ENCODE measurements at regions of chr17 and their contacts with region 1.

Region 1: GRCh38 chr17:76103274-76104139 is at the start of gene EXOC7:
- DNase-seq: peak; percentile 73 to 98
- H3K4me3 ChIP-seq: peak within 1 kb of the TSS; percentile 53 to 81 (median 73)
- H3K27ac ChIP-seq: peak within 1 kb of the TSS; percentile 78
- H3K4me1 ChIP-seq: peaks cover 6 to 16% (median 9%) of the 10 kb centered on the region in 4 experiments; a peak in 6 of 7 replicates
- H3K27me3 ChIP-seq: no peaks in the 10 kb centered on the region
- CTCF ChIP-seq: no peak
- EP300 ChIP-seq: no peak
- POLR2A ChIP-seq: peak in 1 of 2 experiments; percentile 66; a peak in 2 of 3 replicates
- RAD21 ChIP-seq: peak in 1 of 2 experiments; percentile 14; a peak in 1 of 4 replicates
- total RNA-seq, gene EXOC7: 92.6 and 95.3 TPM in 2 replicates

Region 2: DNA sequence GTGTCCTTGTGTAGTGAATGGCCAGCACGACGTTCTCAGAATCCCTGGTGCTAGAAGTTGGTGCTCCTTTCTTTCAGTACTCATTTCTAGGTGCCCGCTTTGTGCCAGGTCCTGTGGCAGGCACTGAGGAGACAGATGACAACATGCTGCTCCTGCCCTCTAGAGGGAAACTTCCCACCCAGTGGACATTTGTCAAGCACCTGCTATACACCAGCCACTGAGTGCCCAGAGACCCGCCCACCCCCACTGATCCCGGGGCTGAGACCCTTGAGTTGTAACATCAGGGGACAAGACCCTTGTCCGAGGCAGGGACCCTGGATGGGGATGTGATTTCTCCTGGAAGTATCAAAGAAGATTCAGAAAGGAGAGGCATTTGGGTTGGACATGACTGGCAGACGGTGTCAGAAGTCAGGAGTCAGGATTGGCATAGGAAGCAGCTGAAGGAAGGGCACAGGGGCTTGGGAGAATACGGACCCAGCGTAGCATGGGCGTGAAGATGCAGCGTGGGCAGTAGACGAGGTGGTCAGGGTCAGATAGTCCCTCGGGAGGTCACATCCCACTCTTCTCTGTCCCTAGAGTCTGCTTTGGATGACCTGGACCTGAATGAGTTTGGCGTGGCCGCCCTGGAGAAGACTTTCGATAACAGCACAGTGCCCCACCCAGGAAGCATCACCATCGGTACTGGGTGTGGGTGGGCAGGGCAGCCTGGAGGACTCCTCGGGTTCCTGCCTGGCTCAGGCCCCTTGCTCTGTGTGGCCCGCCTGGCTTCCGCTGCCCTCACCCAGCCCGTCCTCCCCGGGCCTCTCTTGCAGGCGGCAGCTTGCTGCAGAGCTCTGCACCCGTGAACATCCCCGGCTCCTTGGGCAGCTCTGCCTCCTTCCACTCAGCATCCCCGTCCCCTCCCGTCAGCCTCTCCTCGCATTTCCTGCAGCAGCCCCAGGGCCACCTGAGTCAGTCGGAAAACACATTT is 284.1 kb before region 1 on chr17:
- CTCF ChIA-PET with region 1: no interaction called
- POLR2A ChIA-PET with region 1: no interaction called
- DNase-seq: no peak
- H3K4me3 ChIP-seq: no peak overlapping the region
- H3K27ac ChIP-seq: no peak overlapping the region
- H3K4me1 ChIP-seq: no peaks in the 10 kb centered on the region
- H3K27me3 ChIP-seq: no peaks in the 10 kb centered on the region
- CTCF ChIP-seq: no peak
- EP300 ChIP-seq: no peak
- POLR2A ChIP-seq: no peak
- RAD21 ChIP-seq: no peak

Region 3: DNA sequence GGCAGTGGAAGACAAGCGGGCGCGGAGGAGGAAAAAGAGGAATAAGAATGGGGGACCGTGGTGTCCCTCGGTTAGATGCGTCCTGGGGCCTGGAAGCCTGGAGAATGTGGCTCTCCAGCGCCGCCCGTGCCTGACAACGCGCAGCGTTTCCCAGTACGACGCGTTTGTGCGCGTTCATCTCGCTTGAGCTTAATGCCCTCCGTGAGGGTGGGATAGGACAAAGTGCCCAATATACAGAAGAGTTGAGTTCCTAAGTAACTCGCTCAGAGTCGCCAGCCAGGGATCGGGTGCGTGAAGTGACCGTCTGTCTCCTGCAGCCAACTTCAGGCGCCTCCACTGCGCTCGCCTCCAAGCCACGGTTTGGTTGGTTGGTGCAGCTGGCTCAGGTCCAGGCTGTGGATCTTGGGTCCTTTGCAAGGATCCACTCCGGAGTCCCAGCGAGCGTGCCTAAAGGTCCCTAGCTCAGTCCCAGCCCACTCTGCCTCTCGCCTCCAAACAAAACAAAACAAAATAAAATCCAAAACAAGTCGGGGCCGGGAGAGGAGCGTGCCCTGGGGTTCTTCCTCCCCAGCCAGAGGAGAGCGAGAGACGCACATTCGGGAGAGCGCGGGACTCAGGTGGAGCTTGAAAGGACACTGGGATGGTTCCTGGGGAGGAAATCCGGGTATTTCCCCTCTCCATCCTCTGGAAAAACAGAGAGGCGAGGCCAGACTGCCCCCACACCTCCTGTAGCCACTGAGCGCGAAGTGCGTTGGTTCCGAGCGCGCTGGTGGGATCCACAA is 28.0 kb before region 1 on chr17:
- CTCF ChIA-PET with region 1: interaction called, 3 read pairs
- POLR2A ChIA-PET with region 1: interaction called, 23 read pairs
- DNase-seq: peak in 1 of 2 experiments; percentile 81
- H3K4me3 ChIP-seq: peak overlapping the region; percentile 21 to 60 (median 40); a peak in 5 of 8 replicates
- H3K27ac ChIP-seq: no peak overlapping the region
- H3K4me1 ChIP-seq: peaks cover 0 to 54% (median 36%) of the 10 kb centered on the region in 4 experiments; a peak in 6 of 7 replicates
- H3K27me3 ChIP-seq: peaks cover 54 to 72% (median 68%) of the 10 kb centered on the region in 4 experiments
- CTCF ChIP-seq: peak; percentile 31 to 75 (median 68)
- EP300 ChIP-seq: no peak
- POLR2A ChIP-seq: no peak
- RAD21 ChIP-seq: peak; percentile 33 to 40; a peak in 3 of 4 replicates

Region 4: DNA sequence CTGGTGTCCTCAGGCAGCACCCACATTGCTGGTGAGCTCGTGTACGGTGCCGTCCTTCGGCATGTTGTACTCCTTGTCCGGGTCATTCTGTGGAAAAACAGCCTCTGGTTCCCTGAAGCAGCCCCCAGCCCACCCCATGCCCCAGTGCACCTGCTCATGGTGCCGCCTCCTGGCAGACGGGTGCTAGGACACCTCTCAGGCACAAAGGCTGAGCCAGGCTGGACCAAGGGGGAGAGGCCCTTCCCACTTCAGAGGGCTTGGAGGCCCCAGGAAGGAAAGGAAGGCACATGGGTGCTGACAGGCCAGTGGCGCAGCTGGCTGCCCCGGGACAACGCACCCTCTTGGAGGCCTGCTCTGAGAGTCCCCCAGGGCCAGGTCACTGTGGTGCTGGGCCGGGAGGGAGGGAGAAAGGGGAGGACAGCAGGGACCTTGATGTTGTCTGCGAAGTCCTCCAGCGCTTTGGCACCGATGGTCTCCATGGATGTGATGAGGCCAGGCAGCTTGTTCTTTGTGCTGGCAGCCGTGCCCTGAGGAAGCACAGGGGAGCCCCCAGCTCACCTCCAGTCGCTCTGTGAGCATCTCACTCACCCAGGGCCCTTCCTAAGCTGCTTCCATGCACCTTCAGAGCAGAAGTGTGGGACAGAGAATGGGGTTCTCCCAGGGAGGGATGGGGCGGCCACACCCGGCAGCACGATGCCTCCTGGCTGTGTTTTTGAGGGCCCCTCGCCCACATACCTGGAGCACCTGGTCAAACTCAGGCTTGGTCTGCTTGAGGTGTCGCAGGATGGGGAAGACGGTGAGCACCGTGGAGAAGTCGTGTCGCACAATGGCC is 15.3 kb before region 1 on chr17:
- CTCF ChIA-PET with region 1: interaction called, 11 read pairs
- POLR2A ChIA-PET with region 1: interaction called, 11 read pairs
- DNase-seq: peak in 1 of 2 experiments; percentile 72
- H3K4me3 ChIP-seq: no peak overlapping the region
- H3K27ac ChIP-seq: no peak overlapping the region
- H3K4me1 ChIP-seq: no peaks in the 10 kb centered on the region
- H3K27me3 ChIP-seq: no peaks in the 10 kb centered on the region
- CTCF ChIP-seq: peak; percentile 60 to 74 (median 63)
- EP300 ChIP-seq: no peak
- POLR2A ChIP-seq: no peak
- RAD21 ChIP-seq: peak; percentile 40 to 56

Region 5: DNA sequence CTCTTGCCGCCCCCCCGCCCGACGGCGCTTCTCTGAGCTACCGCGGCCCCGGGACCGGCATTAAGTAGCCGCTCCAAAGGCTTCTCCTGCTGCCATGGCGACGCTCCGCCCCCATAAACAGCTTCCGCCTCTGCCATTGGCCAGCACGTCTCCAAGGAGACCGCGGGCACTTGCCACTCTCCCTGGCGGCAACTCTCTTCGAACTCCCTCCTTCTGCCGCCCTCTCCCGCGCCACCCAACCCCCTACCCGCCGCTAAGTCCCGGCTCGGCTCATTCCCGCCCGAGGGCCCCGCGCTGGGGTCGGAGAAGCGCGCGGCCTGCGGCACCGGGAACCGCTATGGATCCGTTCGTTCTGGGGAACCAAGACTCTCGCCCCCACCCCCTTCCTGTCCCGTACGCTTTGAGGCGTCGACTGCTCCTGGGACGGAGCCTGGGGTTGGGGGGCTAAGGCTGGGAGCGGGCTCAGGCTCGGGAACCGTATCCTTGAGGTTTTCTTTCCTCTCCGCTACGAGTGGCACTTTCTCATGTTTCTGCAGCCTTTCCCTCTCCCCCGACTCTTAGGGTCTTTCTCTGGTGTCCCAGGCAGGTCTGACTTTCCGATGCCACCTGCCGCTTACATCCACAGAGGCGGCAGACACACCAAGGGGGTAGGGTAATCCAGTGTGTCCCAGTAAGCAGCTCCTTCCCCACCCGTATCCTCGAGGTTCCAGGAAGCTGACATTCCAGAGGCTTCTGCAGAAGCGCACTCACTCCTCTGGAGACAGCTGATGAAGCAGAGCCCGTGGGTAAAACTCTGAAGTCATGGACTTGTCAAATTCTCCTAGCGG is 37.9 kb after region 1 on chr17 and contains the start of gene FOXJ1:
- CTCF ChIA-PET with region 1: interaction called, 778 read pairs
- POLR2A ChIA-PET with region 1: interaction called, 6 read pairs
- DNase-seq: peak; percentile 88 to 100
- H3K4me3 ChIP-seq: peak within 1 kb of the TSS; percentile 53 to 71 (median 58)
- H3K27ac ChIP-seq: no peak within 1 kb of the TSS
- H3K4me1 ChIP-seq: peaks cover 17 to 59% (median 54%) of the 10 kb centered on the region in 4 experiments
- H3K27me3 ChIP-seq: peaks cover 31 to 67% (median 60%) of the 10 kb centered on the region in 4 experiments
- CTCF ChIP-seq: no peak
- EP300 ChIP-seq: no peak
- POLR2A ChIP-seq: no peak
- RAD21 ChIP-seq: no peak
- total RNA-seq, gene FOXJ1: 4.9 and 5.4 TPM in 2 replicates